GM12878 (cell line): ENCODE measurements at regions of chr19 and their contacts with region 1.

Region 1: DNA sequence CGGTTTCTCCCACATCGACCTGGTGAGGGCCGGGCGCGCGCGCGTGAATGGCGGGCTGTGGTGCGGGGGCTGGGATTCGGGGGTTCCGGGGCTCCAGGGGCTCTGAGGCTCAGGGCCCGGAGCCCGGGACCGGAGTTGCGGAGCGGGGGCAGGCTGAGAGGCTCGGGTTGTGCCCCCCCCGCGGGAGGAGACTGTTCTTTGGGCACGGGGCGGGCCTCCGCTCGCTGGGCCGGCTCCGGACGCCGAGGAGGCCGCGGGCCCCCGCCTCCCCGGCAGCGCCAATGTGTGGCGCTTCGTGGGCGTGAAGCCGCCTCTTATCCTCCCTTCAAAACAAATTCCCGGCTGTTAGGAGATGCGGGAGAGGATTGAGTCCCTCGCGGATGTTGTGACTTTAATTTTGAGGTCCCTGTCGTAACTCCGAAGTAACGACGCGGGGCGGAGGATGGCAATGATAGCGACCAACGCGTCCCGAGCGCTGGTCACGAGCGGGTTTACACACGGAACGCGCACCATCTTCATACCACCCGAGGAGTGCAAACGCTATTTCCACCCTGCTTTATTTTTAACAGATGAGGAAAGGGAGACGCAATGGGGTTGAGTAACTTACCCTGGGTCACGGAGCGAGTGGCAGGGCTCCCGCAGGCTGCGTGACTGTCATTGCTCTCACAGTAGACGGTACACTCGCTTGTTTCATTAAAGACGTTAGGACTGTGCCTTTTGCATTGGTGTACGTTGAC is 536 bp downstream of the UBA2 start:
- DNase-seq: no peak
- ATAC-seq: peak; percentile 73
- H3K4me3 ChIP-seq: peak overlapping the region; percentile 86
- H3K27ac ChIP-seq: peak overlapping the region; percentile 85
- H3K4me1 ChIP-seq: no peaks in the 10 kb centered on the region
- H3K27me3 ChIP-seq: no peaks in the 10 kb centered on the region
- CTCF ChIP-seq: no peak
- EP300 ChIP-seq: no peak
- POLR2A ChIP-seq: no peak; the same call in 1 of the 2 replicates
- RAD21 ChIP-seq: no peak

Region 2: DNA sequence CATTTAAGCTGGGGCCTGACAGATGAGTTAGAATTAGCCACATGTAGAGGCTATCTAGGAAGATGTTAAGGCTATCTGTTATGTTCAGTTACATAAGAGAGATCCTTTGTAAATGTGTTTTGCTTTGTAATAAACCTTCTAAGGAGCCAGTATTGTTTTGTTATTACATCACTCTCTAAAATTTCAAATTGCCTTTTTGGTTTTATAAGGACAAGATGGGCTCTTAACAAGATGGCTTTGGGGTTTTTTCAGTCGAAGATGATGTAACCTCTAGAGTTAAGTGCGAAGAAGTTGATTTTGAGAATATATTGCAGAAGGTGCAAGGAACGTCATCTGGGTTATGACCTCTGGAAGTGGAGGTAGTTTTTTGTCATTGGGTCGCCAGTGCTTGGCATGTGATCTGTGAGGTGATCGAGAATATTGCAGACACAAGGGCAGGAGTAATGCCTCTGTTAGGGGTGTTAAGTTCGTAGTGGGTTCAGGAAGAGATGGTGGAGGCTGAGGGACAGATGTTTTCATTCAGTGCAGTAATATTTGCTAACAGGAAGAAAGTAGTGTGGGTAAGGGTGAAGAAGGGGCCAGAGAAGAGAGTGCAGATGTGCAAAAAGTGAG is 243.7 kb before region 1 on chr19:
- CTCF ChIA-PET with region 1: no interaction called
- POLR2A ChIA-PET with region 1: interaction called, 4 read pairs
- RAD21 ChIA-PET with region 1: no interaction called
- SMC1A ChIA-PET with region 1: no interaction called
- in situ Hi-C with region 1: no loop called
- intact Hi-C with region 1: loop called (anchors 10 kb)
- DNase-seq: no peak
- ATAC-seq: peak; percentile 56
- H3K4me3 ChIP-seq: no peak overlapping the region
- H3K27ac ChIP-seq: 0 out of 2 replicates have a peak overlapping the region, but pooled peaks have one; percentile 0
- H3K4me1 ChIP-seq: no peaks in the 10 kb centered on the region; the same call in 1 of the 2 replicates
- H3K27me3 ChIP-seq: no peaks in the 10 kb centered on the region
- CTCF ChIP-seq: no peak
- EP300 ChIP-seq: no peak
- POLR2A ChIP-seq: no peak
- RAD21 ChIP-seq: no peak

Region 3: DNA sequence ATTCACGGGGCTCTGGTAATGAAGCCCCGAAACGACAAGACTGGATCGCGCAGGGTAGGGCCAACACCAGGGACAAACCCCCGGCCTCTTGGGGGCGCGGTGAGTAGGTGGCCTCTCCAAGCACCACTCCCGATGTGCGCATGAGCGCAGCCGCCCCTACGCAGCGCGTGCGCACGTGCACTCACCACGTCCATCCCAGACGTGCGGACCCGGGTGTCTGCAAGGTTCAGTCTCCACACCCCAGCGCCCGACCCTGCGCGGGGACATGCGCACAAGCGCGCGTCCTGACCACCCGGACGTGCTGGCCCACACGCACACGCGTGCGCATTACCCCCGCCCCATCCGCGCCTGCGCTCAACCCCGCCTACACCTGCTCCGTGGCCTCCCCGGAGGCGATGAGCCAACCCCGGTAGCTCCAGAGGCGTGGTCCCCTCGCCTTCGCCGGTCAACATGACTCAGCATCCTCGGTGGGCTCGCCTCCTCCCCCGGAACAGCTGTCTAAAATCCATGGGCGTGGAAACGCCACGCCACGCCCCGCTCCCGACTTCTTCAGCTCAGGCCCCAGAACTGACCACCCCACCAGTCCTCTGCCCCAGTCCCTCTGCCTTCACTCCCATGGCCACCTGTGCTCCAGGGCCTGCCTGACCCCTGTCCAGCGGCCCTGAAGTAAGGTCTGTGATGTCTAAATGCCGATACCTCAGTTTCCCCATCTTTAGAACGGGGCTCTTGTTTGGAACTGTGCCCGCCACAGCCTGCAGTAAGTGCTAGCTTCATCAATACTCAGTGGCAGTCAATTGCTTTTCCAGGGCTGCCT is 69.4 kb before region 1 on chr19:
- CTCF ChIA-PET with region 1: interaction called, 13 read pairs
- POLR2A ChIA-PET with region 1: interaction called, 5 read pairs
- RAD21 ChIA-PET with region 1: interaction called, 6 read pairs
- SMC1A ChIA-PET with region 1: interaction called, 6 read pairs
- in situ Hi-C with region 1: no loop called
- intact Hi-C with region 1: no loop called
- DNase-seq: peak; percentile 99
- ATAC-seq: peak; percentile 98
- H3K4me3 ChIP-seq: peak overlapping the region; percentile 46; the same call in 1 of the 2 replicates
- H3K27ac ChIP-seq: peak overlapping the region; percentile 90
- H3K4me1 ChIP-seq: peaks cover 21% of the 10 kb centered on the region
- H3K27me3 ChIP-seq: no peaks in the 10 kb centered on the region
- CTCF ChIP-seq: peak; percentile 61 to 71 (median 67)
- EP300 ChIP-seq: peak; percentile 18 to 25; a peak in 1 of 4 replicates
- POLR2A ChIP-seq: peak; percentile 84
- RAD21 ChIP-seq: no peak

Region 4: GRCh38 chr19:34404109-34404897 is 24.4 kb before region 1 on chr19 and contains the start of gene PDCD2L:
- CTCF ChIA-PET with region 1: interaction called, 7 read pairs
- POLR2A ChIA-PET with region 1: interaction called, 5 read pairs
- RAD21 ChIA-PET with region 1: interaction called, 3 read pairs
- SMC1A ChIA-PET with region 1: interaction called, 4 read pairs
- in situ Hi-C with region 1: no loop called
- intact Hi-C with region 1: loop called (anchors 2 kb)
- DNase-seq: peak; percentile 69
- ATAC-seq: peak; percentile 97
- H3K4me3 ChIP-seq: peak within 1 kb of the TSS; percentile 77
- H3K27ac ChIP-seq: peak within 1 kb of the TSS; percentile 36; the same call in 1 of the 2 replicates
- H3K4me1 ChIP-seq: peaks cover 10% of the 10 kb centered on the region
- H3K27me3 ChIP-seq: no peaks in the 10 kb centered on the region
- CTCF ChIP-seq: no peak
- EP300 ChIP-seq: no peak
- POLR2A ChIP-seq: peak; percentile 93
- RAD21 ChIP-seq: no peak
- polyA plus RNA-seq, gene PDCD2L: 7.2 to 19.1 TPM

Region 5: GRCh38 chr19:34501339-34502320 is 72.9 kb after region 1 on chr19:
- CTCF ChIA-PET with region 1: interaction called, 10 read pairs
- POLR2A ChIA-PET with region 1: interaction called, 4 read pairs
- RAD21 ChIA-PET with region 1: interaction called, 4 read pairs
- SMC1A ChIA-PET with region 1: no interaction called
- in situ Hi-C with region 1: no loop called
- intact Hi-C with region 1: no loop called
- DNase-seq: peak; percentile 25
- ATAC-seq: peak; percentile 96
- H3K4me3 ChIP-seq: no peak overlapping the region
- H3K27ac ChIP-seq: no peak overlapping the region
- H3K4me1 ChIP-seq: no peaks in the 10 kb centered on the region
- H3K27me3 ChIP-seq: no peaks in the 10 kb centered on the region
- CTCF ChIP-seq: peak; percentile 99 to 100 (median 99); a peak in 5 of 6 replicates
- EP300 ChIP-seq: no peak
- POLR2A ChIP-seq: no peak
- RAD21 ChIP-seq: peak; percentile 79

Region 6: GRCh38 chr19:34556488-34556887 is 127.8 kb after region 1 on chr19:
- CTCF ChIA-PET with region 1: no interaction called
- POLR2A ChIA-PET with region 1: no interaction called
- RAD21 ChIA-PET with region 1: no interaction called
- SMC1A ChIA-PET with region 1: no interaction called
- in situ Hi-C with region 1: no loop called
- intact Hi-C with region 1: no loop called
- DNase-seq: no peak
- ATAC-seq: peak; percentile 56
- H3K4me3 ChIP-seq: no peak overlapping the region
- H3K27ac ChIP-seq: no peak overlapping the region
- H3K4me1 ChIP-seq: no peaks in the 10 kb centered on the region
- H3K27me3 ChIP-seq: no peaks in the 10 kb centered on the region
- CTCF ChIP-seq: peak; percentile 26 to 32 (median 27); a peak in 4 of 6 replicates
- EP300 ChIP-seq: no peak
- POLR2A ChIP-seq: no peak
- RAD21 ChIP-seq: no peak

Region 7: DNA sequence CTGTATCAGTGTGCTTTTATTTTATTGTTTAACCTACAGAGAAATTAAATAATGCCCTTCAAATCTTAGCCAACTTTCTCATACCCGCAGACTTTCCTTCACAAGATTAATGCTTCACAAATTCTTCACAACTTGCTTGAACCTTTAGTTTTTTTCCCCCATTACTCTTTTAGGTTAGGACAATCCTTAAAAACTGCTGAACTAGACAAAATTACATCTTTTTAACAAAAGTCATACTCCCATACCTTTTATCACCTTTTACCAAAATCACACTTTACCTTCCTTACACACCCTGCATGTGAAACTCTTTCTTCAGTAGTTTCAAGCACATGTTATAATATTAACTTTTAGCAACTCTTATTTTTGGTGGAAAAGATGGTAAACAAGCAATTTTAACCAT is 189.7 kb after region 1 on chr19:
- CTCF ChIA-PET with region 1: no interaction called
- POLR2A ChIA-PET with region 1: no interaction called
- RAD21 ChIA-PET with region 1: no interaction called
- SMC1A ChIA-PET with region 1: no interaction called
- in situ Hi-C with region 1: no loop called
- intact Hi-C with region 1: no loop called
- DNase-seq: no peak
- ATAC-seq: no peak
- H3K4me3 ChIP-seq: no peak overlapping the region
- H3K27ac ChIP-seq: no peak overlapping the region
- H3K4me1 ChIP-seq: no peaks in the 10 kb centered on the region
- H3K27me3 ChIP-seq: no peaks in the 10 kb centered on the region
- CTCF ChIP-seq: no peak
- EP300 ChIP-seq: no peak
- POLR2A ChIP-seq: no peak
- RAD21 ChIP-seq: no peak